PC-9 (cell line): ENCODE measurements at regions of chr20 and their contacts with region 1.

Region 1: GRCh38 chr20:15799869-15800268 is 773.4 kb downstream of the KIF16B start:
- DNase-seq: peak in 1 of 2 experiments; percentile 37
- H3K4me3 ChIP-seq: no peak overlapping the region
- H3K27ac ChIP-seq: no peak overlapping the region
- H3K4me1 ChIP-seq: no peaks in the 10 kb centered on the region
- H3K27me3 ChIP-seq: no peaks in the 10 kb centered on the region
- CTCF ChIP-seq: no peak

Region 2: DNA sequence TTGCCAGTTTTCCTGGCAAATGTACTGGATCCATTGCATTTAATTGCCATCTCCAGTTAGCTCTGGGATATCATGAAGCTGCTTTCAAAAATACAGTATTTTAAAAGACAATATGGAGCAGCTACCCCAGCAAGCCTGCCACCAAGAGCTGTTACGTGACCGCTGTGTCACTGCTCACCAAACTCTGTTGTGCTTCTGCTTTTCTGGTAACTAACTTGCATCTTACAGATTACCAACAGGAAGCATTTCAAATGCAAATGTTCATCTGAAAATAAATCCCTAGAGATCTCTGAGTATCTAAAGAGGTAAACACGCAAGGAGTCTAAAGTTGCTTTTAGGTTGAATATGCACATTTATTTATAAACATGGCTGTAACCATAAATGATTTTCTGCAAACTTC is 234.9 kb before region 1 on chr20:
- CTCF ChIA-PET with region 1: no interaction called
- POLR2A ChIA-PET with region 1: interaction called, 11 read pairs
- intact Hi-C with region 1: no loop called
- DNase-seq: no peak
- H3K4me3 ChIP-seq: no peak overlapping the region
- H3K27ac ChIP-seq: no peak overlapping the region
- H3K4me1 ChIP-seq: no peaks in the 10 kb centered on the region
- H3K27me3 ChIP-seq: no peaks in the 10 kb centered on the region
- CTCF ChIP-seq: no peak

Region 3: GRCh38 chr20:15594254-15594653 is 205.6 kb before region 1 on chr20:
- CTCF ChIA-PET with region 1: no interaction called
- POLR2A ChIA-PET with region 1: no interaction called
- intact Hi-C with region 1: no loop called
- DNase-seq: no peak
- H3K4me3 ChIP-seq: no peak overlapping the region
- H3K27ac ChIP-seq: no peak overlapping the region
- H3K4me1 ChIP-seq: no peaks in the 10 kb centered on the region
- H3K27me3 ChIP-seq: no peaks in the 10 kb centered on the region
- CTCF ChIP-seq: no peak

Region 4: DNA sequence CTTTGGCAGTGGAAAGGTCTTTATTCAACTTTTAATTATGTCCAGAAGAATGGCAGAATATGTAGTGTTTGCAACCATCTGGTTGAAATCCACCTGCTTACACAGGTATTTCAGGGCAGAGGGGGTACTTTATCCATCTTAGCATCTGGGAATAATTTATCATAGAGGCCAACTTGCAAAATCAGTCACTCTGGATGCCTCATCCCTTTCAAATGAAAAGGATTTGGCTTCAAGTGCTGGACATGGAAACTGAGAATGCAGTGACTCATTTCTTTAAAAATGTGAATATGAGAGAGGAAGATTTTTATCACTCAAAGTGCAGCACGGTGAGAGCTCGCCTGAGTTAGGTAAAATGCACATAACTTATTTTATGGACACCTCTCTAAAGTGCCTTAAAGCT is 15.0 kb after region 1 on chr20:
- CTCF ChIA-PET with region 1: no interaction called
- POLR2A ChIA-PET with region 1: no interaction called
- intact Hi-C with region 1: no loop called
- DNase-seq: peak in 1 of 2 experiments; percentile 87
- H3K4me3 ChIP-seq: no peak overlapping the region
- H3K27ac ChIP-seq: 0 out of 2 replicates have a peak overlapping the region, but pooled peaks have one; percentile 32
- H3K4me1 ChIP-seq: peaks cover 44% of the 10 kb centered on the region
- H3K27me3 ChIP-seq: no peaks in the 10 kb centered on the region
- CTCF ChIP-seq: no peak